ENCODE measurements at regions of chr1 and their contacts with region 1.

Region 1: GRCh38 chr1:174022080-174022975 is at the start of gene RC3H1:
- DNase-seq: peak; percentile 91
- H3K4me3 Mint-ChIP-seq: peak within 1 kb of the TSS; percentile 77
- H3K27ac Mint-ChIP-seq: peak within 1 kb of the TSS; percentile 94
- H3K4me1 Mint-ChIP-seq: peaks cover 26% of the 10 kb centered on the region
- H3K27me3 Mint-ChIP-seq: no peaks in the 10 kb centered on the region
- CTCF ChIP-seq: no peak
- total RNA-seq, gene RC3H1: 42.1 and 44.2 TPM in 2 replicates

Region 2: DNA sequence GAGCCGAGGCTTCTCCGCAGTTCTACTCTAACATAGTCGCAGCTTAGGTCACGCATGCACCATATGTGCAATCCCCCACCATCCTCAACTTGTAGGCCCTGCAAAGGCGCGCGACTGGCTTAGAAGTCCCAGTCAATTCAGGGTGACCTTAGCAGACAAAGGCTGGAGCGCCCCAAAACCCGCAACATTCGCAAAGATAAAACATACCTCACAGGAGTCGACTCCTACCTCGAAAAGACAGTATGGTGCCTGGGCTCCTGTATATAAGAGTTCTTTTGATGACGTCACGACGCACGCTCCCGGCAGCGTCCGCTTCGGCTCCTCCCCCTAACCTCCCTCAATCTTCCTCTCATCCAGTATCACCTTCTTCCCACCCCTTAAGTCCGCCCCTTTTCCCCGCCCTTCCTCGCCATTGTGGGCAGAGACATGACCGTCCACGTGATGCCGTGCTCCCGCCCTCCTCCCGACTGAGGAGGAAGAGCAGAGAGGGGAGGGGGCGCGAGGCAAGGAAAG is 154.5 kb before region 1 on chr1 and contains the start of gene GAS5:
- CTCF ChIA-PET with region 1: interaction called, 3 read pairs
- intact Hi-C with region 1: loop called (anchors 5 kb)
- DNase-seq: peak; percentile 100
- H3K4me3 Mint-ChIP-seq: peak within 1 kb of the TSS; percentile 81
- H3K27ac Mint-ChIP-seq: peak within 1 kb of the TSS; percentile 100
- H3K4me1 Mint-ChIP-seq: peaks cover 28% of the 10 kb centered on the region
- H3K27me3 Mint-ChIP-seq: peaks cover 13% of the 10 kb centered on the region
- CTCF ChIP-seq: no peak
- total RNA-seq, gene GAS5: 345 and 367 TPM in 2 replicates

Region 3: DNA sequence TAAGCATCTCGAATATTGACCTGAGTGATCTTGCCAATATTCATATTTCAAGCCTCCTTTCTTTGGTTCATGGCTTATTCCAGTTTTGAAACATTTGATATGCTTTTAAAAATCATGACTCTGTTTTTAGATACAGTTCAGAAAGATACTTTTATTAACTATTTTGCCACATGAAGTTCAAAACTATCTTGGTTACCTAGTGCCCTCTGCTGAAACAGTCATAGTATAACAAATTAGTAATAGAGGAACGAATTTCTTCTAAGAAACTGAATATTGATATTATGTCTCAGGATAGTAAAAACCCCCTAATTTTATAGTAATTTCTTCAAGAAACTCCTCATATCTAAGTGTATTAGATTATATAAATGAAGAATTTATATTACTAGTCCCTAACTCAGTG is 52.4 kb after region 1 on chr1:
- CTCF ChIA-PET with region 1: interaction called, 3 read pairs
- intact Hi-C with region 1: loop called (anchors 5 kb)
- DNase-seq: no peak
- H3K4me3 Mint-ChIP-seq: no peak overlapping the region
- H3K27ac Mint-ChIP-seq: no peak overlapping the region
- H3K4me1 Mint-ChIP-seq: no peaks in the 10 kb centered on the region
- H3K27me3 Mint-ChIP-seq: no peaks in the 10 kb centered on the region
- CTCF ChIP-seq: peak; percentile 11

Region 4: GRCh38 chr1:174159252-174160108 is 137.2 kb after region 1 on chr1 and contains the start of gene RABGAP1L:
- CTCF ChIA-PET with region 1: no interaction called
- intact Hi-C with region 1: loop called (anchors 10 kb)
- DNase-seq: peak; percentile 96
- H3K4me3 Mint-ChIP-seq: peak within 1 kb of the TSS; percentile 100
- H3K27ac Mint-ChIP-seq: peak within 1 kb of the TSS; percentile 78
- H3K4me1 Mint-ChIP-seq: peaks cover 36% of the 10 kb centered on the region
- H3K27me3 Mint-ChIP-seq: no peaks in the 10 kb centered on the region
- CTCF ChIP-seq: no peak
- total RNA-seq, gene RABGAP1L: 132 and 135 TPM in 2 replicates

Region 5: DNA sequence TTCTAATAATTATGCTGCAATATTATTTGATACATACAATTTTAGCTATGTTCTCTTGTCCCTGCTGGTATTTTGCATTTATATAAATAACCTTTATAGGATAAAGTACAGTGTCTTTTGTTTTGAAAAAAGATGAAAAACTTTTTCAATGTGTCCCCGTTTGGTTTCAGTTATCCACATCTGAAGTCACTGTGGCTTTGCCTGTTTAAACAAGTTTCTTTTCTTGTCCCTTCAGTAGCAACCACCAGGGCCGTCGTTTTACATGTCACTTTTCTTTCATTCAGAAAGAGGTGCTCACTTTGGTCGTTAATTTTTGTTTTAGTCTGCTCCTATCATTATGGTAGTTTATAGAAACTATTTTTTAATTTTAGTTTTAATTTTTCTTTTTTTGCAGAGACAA is 178.4 kb after region 1 on chr1:
- CTCF ChIA-PET with region 1: no interaction called
- intact Hi-C with region 1: no loop called
- DNase-seq: no peak
- H3K4me3 Mint-ChIP-seq: no peak overlapping the region
- H3K27ac Mint-ChIP-seq: no peak overlapping the region
- H3K4me1 Mint-ChIP-seq: peaks cover 18% of the 10 kb centered on the region
- H3K27me3 Mint-ChIP-seq: no peaks in the 10 kb centered on the region
- CTCF ChIP-seq: no peak

Measured in Calu3 (cell line).